Ovary (tissue), 10 donors: ENCODE measurements at regions of chr17 and their contacts with region 1.

Region 1: DNA sequence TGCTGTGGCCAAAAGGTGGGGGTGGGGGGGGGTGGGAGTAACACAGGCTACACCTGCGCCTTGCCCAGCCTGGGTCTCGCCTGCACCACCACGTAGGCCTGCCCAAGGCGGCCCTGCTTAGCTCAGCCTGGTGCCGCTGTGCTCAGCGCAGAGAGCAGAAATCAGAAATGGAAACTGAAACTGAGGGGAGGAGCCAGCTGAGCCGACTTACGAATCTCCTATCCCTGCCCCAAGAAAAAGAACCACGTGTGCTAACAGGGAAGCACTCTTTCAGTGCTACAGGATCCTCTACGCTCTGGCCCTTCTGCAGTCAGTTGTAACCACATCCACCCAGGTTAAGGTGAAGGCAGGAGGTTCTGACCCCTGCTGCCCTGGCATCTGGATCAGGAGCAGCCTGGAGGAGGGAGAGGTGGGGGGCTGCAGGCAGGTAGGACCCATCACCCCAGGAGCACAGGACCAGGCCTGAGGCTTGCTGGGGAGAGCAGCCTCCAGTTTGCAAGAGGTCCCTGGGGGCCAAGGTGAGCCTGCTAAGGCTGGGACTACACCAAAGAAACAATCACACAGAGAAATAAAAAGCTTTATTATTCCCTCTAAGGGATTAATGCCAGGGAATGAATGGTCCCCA is at the start of gene DHX58:
- DNase-seq: peak; percentile 72 to 81 (median 78)
- H3K4me3 ChIP-seq: peak within 1 kb of the TSS; percentile 55
- H3K27ac ChIP-seq: peak within 1 kb of the TSS; percentile 72 to 88
- H3K4me1 ChIP-seq: peaks cover 10% of the 10 kb centered on the region
- H3K27me3 ChIP-seq: no peaks in the 10 kb centered on the region
- CTCF ChIP-seq: no peak
- EP300 ChIP-seq: no peak
- POLR2A ChIP-seq: peak; percentile 70
- total RNA-seq, gene DHX58: 8.6 to 24.6 (median 19.3) TPM

Region 2: GRCh38 chr17:41835800-41836549 is 276.7 kb before region 1 on chr17 and contains the start of gene NT5C3B:
- intact Hi-C with region 1: no loop called
- DNase-seq: peak; percentile 64 to 76 (median 69)
- H3K4me3 ChIP-seq: peak within 1 kb of the TSS; percentile 78
- H3K27ac ChIP-seq: peak within 1 kb of the TSS; percentile 83 to 91
- H3K4me1 ChIP-seq: peaks cover 4% of the 10 kb centered on the region
- H3K27me3 ChIP-seq: no peaks in the 10 kb centered on the region
- CTCF ChIP-seq: no peak
- EP300 ChIP-seq: no peak
- POLR2A ChIP-seq: peak; percentile 32
- total RNA-seq, gene NT5C3B: 34.5 to 65.4 (median 48.8) TPM

Region 3: GRCh38 chr17:41966463-41967140 is 146.1 kb before region 1 on chr17 and contains the start of gene CNP:
- intact Hi-C with region 1: loop called (anchors 2 to 10 kb)
- DNase-seq: peak; percentile 89 to 95 (median 91)
- H3K4me3 ChIP-seq: peak within 1 kb of the TSS; percentile 95
- H3K27ac ChIP-seq: peak within 1 kb of the TSS; percentile 64 to 70
- H3K4me1 ChIP-seq: peaks cover 7% of the 10 kb centered on the region
- H3K27me3 ChIP-seq: no peaks in the 10 kb centered on the region
- CTCF ChIP-seq: peak in 1 of 3 donors; percentile 29
- EP300 ChIP-seq: no peak
- POLR2A ChIP-seq: peak; percentile 40
- total RNA-seq, gene CNP: 30.5 to 88.9 (median 77.5) TPM

Region 4: GRCh38 chr17:42019509-42020404 is 92.9 kb before region 1 on chr17 and contains the start of gene NKIRAS2:
- intact Hi-C with region 1: loop called in 2 of 4 experiments (anchors 2 to 5 kb)
- DNase-seq: peak; percentile 89 to 94 (median 92)
- H3K4me3 ChIP-seq: peak within 1 kb of the TSS; percentile 99
- H3K27ac ChIP-seq: peak within 1 kb of the TSS; percentile 3 to 76
- H3K4me1 ChIP-seq: peaks cover 13% of the 10 kb centered on the region
- H3K27me3 ChIP-seq: no peaks in the 10 kb centered on the region
- CTCF ChIP-seq: peak; percentile 92 to 97 (median 92)
- EP300 ChIP-seq: no peak
- POLR2A ChIP-seq: peak; percentile 52
- total RNA-seq, gene NKIRAS2: 11.8 to 27.6 (median 22.2) TPM

Region 5: GRCh38 chr17:42027961-42028790 is 84.5 kb before region 1 on chr17:
- intact Hi-C with region 1: loop called (anchors 2 to 5 kb)
- DNase-seq: no peak
- H3K4me3 ChIP-seq: no peak overlapping the region
- H3K27ac ChIP-seq: no peak overlapping the region
- H3K4me1 ChIP-seq: peaks cover 2% of the 10 kb centered on the region
- H3K27me3 ChIP-seq: no peaks in the 10 kb centered on the region
- CTCF ChIP-seq: no peak
- EP300 ChIP-seq: no peak
- POLR2A ChIP-seq: no peak

Region 6: DNA sequence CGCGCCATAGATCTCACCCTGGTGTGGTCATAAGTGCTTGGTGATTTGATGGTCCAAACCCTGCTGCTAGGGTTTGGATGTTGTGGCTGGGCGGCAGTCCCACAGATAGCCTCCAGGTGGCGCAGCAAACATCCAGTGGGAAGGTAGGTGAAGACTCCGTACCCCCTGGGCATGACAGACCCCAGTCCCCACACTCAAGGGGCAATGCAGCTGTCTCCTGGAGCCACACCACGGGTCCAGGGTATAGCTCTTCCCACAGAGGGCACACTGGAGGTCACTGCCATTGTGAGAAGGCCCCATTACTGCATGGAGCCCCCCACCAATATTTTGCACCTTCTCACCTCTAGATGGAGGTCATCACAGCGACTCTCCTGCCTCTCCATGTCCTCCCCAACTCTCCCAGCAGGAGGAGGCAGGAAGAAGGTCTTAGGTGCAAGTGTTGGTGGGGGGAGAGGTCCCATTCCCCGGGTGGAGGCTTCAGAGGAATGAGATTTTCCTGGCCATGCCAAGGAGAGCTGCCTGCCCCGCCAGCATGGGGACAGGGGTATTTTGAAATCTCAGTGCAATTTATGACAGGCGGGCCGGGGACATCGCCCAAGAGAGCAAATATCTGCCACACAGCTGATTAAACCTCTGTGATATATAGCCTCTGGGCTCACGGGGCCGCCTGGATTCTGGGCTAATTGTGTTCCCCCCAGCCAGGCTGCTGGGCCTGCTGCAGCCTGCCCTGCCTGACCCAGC is 45.1 kb before region 1 on chr17:
- intact Hi-C with region 1: loop called (anchors 5 to 10 kb)
- DNase-seq: peak; percentile 63 to 83 (median 78)
- H3K4me3 ChIP-seq: no peak overlapping the region
- H3K27ac ChIP-seq: no peak overlapping the region
- H3K4me1 ChIP-seq: no peaks in the 10 kb centered on the region
- H3K27me3 ChIP-seq: no peaks in the 10 kb centered on the region
- CTCF ChIP-seq: peak; percentile 71 to 90 (median 86)
- EP300 ChIP-seq: no peak
- POLR2A ChIP-seq: no peak

Region 7: GRCh38 chr17:42072323-42073187 is 40.1 kb before region 1 on chr17:
- intact Hi-C with region 1: loop called (anchors 5 to 10 kb)
- DNase-seq: peak in 1 of 5 donors; percentile 45
- H3K4me3 ChIP-seq: peak overlapping the region; percentile 3
- H3K27ac ChIP-seq: no peak overlapping the region
- H3K4me1 ChIP-seq: no peaks in the 10 kb centered on the region
- H3K27me3 ChIP-seq: no peaks in the 10 kb centered on the region
- CTCF ChIP-seq: no peak
- EP300 ChIP-seq: no peak
- POLR2A ChIP-seq: no peak